Posterior cingulate gyrus (tissue), 11 donors: ENCODE measurements at regions of chr10 and their contacts with region 1.

Region 1: DNA sequence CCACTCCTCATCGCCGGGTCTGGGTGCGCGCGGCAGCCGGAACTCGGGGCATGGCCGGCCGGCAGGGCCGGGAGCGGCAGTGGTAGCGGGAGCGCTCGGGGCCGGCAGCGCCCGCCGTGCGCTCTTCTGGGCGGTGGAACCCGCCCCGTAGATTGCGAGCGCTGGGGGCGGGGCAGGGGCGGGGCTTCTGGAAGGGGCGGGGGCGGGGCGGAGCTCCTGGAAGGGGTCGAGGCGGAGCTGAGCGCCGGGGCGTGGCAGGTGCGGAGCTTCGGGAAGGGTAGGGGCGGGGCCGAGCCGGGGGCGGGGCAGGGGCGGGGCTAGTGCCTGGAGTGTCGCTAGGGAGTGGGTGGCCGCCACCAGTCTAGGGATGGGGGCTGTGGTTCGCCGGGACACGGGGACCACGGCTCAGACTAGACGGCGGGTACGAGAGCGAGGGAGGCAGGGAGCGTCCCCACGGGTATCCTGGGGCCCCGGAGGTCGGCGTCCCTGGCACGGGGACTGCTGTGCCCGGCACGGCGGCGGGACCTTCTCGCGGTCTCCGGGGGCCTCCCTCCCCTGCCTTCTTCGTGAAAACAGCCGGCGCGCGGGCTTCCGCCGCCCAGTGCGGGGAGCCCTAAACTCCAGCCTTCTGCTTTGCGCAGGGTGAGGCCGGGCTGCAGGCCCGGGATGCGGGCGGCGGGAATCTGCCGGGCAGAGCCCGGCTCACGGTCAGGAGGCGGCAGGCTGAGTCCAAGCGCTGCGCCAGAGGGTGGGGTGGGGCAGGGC is at the start of gene STK32C:
- DNase-seq: peak; percentile 80 to 99 (median 92)

Region 2: DNA sequence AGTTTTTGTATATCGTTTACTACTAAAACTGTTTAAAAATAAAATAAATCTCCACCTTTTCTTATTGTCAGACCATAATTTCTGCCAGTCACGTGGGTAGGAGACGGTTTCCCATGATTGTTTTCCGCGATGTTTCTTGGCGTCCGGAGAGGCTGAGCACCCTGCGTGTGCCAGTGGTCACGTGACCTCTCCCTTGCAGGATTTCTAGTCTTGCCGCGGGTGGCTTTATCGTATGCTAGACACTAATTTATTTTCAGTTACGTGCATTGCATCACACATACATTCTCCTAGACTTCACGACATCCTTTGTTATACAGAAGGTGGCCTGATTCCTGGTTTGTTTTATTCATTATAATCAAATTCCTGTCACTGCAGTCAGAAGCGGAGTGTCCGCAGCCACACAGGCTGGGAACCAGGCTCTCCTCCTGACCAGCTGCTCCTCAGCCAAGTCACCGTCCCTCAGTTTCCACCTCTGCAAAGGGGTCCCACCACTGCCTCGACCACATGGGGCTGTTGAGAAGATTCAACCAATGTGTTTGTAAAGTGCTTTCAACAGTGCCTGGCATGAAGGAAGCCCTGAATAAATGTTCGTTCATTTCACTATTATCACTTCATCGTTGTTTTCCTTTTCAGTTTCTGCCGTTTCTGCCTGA is 610.4 kb before region 1 on chr10:
- intact Hi-C with region 1: no loop called
- DNase-seq: peak in 1 of 10 donors; percentile 43

Region 3: GRCh38 chr10:132331526-132332432 is 23.8 kb after region 1 on chr10 and contains the start of gene LRRC27:
- intact Hi-C with region 1: loop called (anchors 1 kb)
- DNase-seq: peak; percentile 92 to 99 (median 96)